Cardiac septum (tissue), 1 donor: ENCODE measurements at regions of chr5 and their contacts with region 1.

Region 1: GRCh38 chr5:140639148-140639979 is at the start of gene TMCO6:
- DNase-seq: peak; percentile 99
- total RNA-seq, gene TMCO6: 3.6 TPM

Region 2: DNA sequence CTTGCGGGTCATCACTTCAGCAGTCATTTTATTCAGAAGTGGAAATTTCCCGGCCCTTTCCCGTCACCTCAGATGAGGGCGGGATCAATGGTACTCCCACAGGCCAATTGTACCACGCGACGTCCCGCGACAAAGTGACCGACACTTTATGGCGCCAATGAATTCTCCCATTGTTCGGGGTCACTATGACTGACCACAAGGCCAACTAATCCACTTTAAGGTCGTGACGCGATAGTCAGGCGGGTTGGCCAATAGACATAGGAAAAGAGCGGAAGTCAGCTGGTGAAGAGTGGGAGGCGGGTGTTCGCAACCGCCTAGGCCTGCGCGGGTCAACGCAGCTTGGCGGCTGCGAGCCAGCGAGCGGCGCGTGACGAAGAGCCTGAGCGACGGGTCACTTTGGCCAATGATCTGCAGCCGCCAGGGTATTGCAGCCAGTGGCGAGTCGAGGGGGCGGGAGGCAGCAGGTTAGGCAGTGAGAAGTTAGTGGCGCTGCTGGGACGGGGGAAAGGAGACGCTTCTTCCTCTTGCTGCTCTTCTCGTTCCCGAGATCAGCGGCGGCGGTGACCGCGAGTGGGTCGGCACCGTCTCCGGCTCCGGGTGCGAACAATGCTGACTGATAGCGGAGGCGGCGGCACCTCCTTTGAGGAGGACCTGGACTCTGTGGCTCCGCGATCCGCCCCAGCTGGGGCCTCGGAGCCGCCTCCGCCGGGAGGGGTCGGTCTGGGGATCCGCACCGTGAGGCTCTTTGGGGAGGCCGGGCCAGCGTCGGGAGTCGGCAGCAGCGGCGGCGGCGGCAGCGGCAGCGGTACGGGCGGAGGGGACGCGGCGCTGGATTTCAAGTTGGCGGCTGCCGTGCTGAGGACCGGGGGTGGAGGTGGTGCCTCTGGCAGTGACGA is 237.8 kb before region 1 on chr5 and contains the start of gene ANKHD1:
- intact Hi-C with region 1: loop called (anchors 5 kb)
- DNase-seq: peak; percentile 99
- total RNA-seq, gene ANKHD1: 73.0 TPM

Region 3: DNA sequence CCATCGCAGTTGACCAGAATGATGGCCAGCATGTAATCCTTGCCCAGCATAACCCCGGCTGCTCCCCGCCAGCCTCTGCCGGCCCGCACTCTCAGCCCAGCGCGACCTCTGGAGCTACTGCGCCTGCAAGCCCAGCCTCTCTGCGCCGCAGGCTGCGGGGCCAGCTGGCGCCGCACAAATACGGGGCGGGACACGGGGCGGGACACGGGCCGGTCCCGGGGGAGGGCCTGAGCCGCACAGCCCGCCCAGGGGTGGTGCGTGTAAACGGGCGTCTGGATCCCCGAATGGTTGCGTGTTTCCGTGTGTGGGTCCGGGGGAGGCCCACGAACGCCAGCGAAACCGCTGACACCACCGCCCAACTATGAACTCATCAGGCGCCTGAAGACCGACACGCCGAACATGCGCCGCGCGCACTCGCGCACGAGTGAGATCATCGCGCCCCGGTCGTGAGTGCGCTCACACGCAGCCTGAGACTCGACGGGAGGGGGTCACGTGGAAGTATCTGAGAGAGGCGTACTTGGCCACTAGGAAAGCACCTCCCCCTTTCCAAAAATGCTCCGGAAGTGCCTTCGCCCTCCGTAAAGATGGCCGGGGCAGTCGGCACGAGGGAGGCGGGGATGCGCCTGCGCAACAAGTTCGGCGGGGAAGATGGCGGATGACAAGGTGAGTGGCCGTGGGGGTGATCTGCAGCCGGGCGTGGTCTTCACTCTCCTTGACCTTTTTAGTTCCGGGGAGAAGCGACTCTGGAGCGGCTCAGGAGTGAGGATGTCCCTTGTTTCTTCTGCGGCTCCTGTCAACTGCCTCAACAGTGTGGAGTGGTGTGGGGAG is 75.0 kb before region 1 on chr5 and contains the starts of genes APBB3 and SLC35A4:
- intact Hi-C with region 1: loop called (anchors 5 kb)
- DNase-seq: peak; percentile 98
- total RNA-seq, gene APBB3: 18.4 TPM
- total RNA-seq, gene SLC35A4: 81.8 TPM

Region 4: DNA sequence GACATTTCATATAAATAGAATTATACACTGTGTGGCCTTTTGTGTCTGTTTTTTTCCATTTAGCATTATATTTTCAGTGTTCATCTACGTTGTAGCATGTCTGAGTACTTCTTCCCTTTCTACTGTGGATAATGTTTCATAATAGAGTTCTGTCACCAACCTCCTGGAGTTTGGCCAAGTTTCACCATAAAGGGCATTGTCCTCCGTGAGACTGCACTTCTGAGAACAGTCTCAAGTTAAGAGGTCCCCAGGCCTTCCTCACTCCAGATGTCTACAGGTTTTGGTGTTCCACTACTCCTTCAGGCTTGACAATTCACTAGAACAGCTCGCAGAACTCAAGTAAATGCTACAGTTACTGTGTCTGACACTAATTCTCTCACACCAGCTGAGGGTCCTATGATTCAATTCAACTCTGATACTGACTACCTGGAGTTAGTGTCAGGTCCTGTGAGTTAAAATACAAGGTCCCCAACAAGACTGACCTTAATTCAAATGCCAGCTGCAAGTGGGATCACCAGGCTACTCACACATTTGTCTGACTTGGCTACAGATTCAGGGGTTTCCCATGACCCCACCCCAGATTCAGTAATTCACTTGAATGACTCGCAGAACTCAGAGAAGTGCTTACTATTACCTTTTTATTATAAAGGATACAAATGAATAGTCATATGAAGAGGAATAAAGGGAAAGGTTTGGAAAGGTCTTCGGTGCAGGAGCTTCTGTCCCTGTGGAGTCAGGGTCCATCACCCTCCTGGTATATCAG is 43.6 kb before region 1 on chr5:
- intact Hi-C with region 1: no loop called
- DNase-seq: no peak